Activated CD4-positive, alpha-beta T cell treated with anti-CD3 and anti-CD28 coated beads for 36 hours (primary cell): ENCODE measurements at regions of chr1 and their contacts with region 1.

Region 1: GRCh38 chr1:219837274-219837993 is 90.9 kb downstream of the SLC30A10 start:
- DNase-seq: no peak
- ATAC-seq: no peak
- H3K4me3 Mint-ChIP-seq: no peak overlapping the region
- H3K27ac Mint-ChIP-seq: no peak overlapping the region
- H3K4me1 Mint-ChIP-seq: no peaks in the 10 kb centered on the region
- H3K27me3 Mint-ChIP-seq: peaks cover 16% of the 10 kb centered on the region

Region 2: GRCh38 chr1:220129479-220130210 is 292.2 kb after region 1 on chr1:
- CTCF ChIA-PET with region 1: no interaction called
- POLR2A ChIA-PET with region 1: no interaction called
- intact Hi-C with region 1: loop called in 1 of 2 experiments (anchors 5 kb)
- DNase-seq: no peak
- ATAC-seq: peak; percentile 66
- H3K4me3 Mint-ChIP-seq: no peak overlapping the region
- H3K27ac Mint-ChIP-seq: no peak overlapping the region
- H3K4me1 Mint-ChIP-seq: peaks cover 14% of the 10 kb centered on the region
- H3K27me3 Mint-ChIP-seq: no peaks in the 10 kb centered on the region